Activated B cell treated with CpG ODN at 0.5 μM for 24 hours (primary cell): ENCODE measurements at regions of chr3 and their contacts with region 1.

Region 1: DNA sequence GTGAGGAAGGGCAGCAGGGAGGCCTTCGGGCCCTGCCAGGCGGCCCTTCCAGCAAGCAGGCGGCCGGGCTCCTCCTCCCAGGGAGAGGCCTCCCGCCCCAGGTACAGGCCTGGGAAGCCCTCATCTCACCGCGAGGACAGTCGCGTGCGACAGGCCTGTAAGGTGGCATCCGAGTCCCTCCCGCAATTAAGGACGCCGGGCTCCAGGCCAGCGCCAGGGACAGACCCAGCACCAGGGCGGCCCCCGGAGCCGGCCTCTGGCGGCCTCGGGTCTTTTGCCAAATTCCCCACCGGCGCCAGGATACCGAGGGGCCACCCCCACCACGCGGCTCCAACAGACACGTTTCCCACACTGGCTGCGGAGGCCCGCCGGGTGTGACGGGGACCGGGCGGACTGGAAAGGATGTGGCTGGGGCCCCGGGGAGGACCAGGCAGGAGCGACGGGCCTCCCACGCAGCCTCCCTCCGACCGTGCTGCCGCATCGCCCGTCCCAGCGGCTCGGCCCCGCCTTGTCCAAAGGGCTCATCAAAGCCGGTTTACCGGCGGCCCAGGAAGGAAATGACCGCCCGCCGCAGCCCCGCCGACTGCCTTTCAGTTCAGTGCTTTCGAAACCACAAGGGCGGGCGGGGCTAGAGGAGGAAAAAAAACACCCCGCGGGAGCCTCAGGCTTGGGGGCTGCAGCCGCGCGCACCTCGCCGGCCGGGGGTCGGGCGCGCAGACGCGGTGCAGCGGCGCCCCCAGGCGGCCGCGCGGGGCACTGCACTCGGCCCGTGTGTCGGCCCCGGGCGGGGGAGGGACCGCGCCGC is 11.3 kb downstream of the XXYLT1 start:
- DNase-seq: peak; percentile 95
- ATAC-seq: peak; percentile 91
- H3K4me3 Mint-ChIP-seq: peak overlapping the region; percentile 74
- H3K27ac Mint-ChIP-seq: peak overlapping the region; percentile 81
- H3K4me1 Mint-ChIP-seq: peaks cover 13% of the 10 kb centered on the region
- H3K27me3 Mint-ChIP-seq: no peaks in the 10 kb centered on the region
- CTCF ChIP-seq: no peak

Region 2: DNA sequence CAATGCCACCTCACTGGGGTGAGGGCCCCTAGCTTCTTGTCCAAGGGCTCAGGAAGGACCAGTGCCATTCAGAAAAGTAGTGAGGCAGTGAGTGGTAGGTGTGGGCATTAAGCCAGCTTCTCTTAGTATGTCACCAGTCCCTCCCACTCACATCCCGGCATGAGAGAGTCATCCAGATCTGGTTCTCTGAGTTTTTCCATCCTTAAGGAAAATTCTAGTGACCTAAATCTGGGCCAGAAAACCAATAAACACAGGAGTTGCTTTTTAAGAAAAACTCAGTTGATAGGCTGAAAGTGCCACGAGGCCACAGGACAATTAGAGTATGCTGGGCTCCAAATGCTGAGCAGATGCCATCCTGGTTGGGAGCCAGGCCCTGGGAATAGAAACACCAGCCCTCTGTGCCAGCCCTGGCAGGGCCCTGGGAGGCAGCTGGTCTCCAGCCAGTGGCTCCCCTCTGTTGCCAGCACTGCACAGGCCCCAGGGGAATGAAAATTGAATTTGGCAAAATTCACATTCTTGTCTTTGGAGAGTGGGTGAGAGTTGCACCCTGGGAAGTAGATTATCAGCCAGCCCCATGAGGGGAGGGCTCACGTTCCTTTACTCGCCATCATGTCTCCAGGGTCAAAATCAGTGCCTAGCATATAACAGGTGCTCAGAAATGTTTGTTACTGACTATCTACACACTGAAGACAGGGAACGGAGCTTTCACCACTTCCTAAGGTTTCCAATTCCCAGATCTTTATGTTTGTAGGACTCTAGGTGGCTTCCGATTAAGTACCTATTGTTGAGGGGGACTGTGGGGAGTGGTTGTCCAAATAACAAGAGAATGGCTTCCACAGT is 521.2 kb before region 1 on chr3:
- CTCF ChIA-PET with region 1: no interaction called
- POLR2A ChIA-PET with region 1: no interaction called
- intact Hi-C with region 1: loop called (anchors 1 kb)
- DNase-seq: no peak
- ATAC-seq: no peak
- H3K4me3 Mint-ChIP-seq: no peak overlapping the region
- H3K27ac Mint-ChIP-seq: no peak overlapping the region
- H3K4me1 Mint-ChIP-seq: peaks cover 30% of the 10 kb centered on the region
- H3K27me3 Mint-ChIP-seq: no peaks in the 10 kb centered on the region
- CTCF ChIP-seq: no peak

Region 3: GRCh38 chr3:194769020-194769643 is 490.5 kb before region 1 on chr3:
- CTCF ChIA-PET with region 1: interaction called, 3 read pairs
- POLR2A ChIA-PET with region 1: no interaction called
- intact Hi-C with region 1: loop called (anchors 1 kb)
- DNase-seq: peak; percentile 69
- ATAC-seq: peak; percentile 98
- H3K4me3 Mint-ChIP-seq: peak overlapping the region; percentile 86
- H3K27ac Mint-ChIP-seq: peak overlapping the region; percentile 94
- H3K4me1 Mint-ChIP-seq: peaks cover 34% of the 10 kb centered on the region
- H3K27me3 Mint-ChIP-seq: peaks cover 5% of the 10 kb centered on the region
- CTCF ChIP-seq: no peak

Region 4: GRCh38 chr3:195001961-195002861 is 257.5 kb before region 1 on chr3:
- CTCF ChIA-PET with region 1: interaction called, 6 read pairs
- POLR2A ChIA-PET with region 1: interaction called, 3 read pairs
- intact Hi-C with region 1: loop called (anchors 1 kb)
- DNase-seq: no peak
- ATAC-seq: peak; percentile 79
- H3K4me3 Mint-ChIP-seq: no peak overlapping the region
- H3K27ac Mint-ChIP-seq: no peak overlapping the region
- H3K4me1 Mint-ChIP-seq: peaks cover 31% of the 10 kb centered on the region
- H3K27me3 Mint-ChIP-seq: no peaks in the 10 kb centered on the region
- CTCF ChIP-seq: no peak

Region 5: DNA sequence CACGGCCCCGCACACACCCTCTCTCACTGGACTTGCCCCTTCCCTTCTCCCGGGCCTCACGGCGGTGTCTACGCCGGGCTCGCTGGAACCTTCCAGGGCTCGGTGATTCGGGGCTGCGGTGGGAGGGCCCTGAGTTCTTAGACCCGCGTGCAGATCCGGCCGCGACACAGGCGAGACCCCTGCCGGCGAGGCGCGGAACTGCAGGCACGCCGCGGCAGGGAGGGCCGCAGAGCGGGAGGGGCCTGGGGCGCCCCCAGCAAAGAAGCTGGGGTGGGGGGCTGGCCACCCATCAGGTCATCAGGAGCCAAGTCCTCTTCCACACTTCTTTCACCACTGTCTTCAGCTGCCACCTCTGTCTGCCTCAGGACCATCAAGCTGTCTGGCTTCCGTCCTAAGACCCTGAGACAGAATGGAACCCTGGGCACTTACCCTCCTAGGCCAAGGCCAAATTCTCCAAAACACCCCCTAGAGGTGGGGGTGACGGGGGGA is 153.2 kb before region 1 on chr3:
- CTCF ChIA-PET with region 1: interaction called, 5 read pairs
- POLR2A ChIA-PET with region 1: interaction called, 3 read pairs
- intact Hi-C with region 1: loop called (anchors 1 kb)
- DNase-seq: peak; percentile 86
- ATAC-seq: peak; percentile 98
- H3K4me3 Mint-ChIP-seq: peak overlapping the region; percentile 67
- H3K27ac Mint-ChIP-seq: peak overlapping the region; percentile 61
- H3K4me1 Mint-ChIP-seq: peaks cover 35% of the 10 kb centered on the region
- H3K27me3 Mint-ChIP-seq: no peaks in the 10 kb centered on the region
- CTCF ChIP-seq: peak; percentile 94

Region 6: GRCh38 chr3:195154793-195155535 is 104.7 kb before region 1 on chr3:
- CTCF ChIA-PET with region 1: interaction called, 3 read pairs
- POLR2A ChIA-PET with region 1: interaction called, 5 read pairs
- intact Hi-C with region 1: loop called (anchors 2 kb)
- DNase-seq: no peak
- ATAC-seq: peak; percentile 40
- H3K4me3 Mint-ChIP-seq: peak overlapping the region; percentile 53
- H3K27ac Mint-ChIP-seq: peak overlapping the region; percentile 90
- H3K4me1 Mint-ChIP-seq: peaks cover 90% of the 10 kb centered on the region
- H3K27me3 Mint-ChIP-seq: no peaks in the 10 kb centered on the region
- CTCF ChIP-seq: no peak

Region 7: GRCh38 chr3:195204360-195205163 is 55.1 kb before region 1 on chr3:
- CTCF ChIA-PET with region 1: no interaction called
- POLR2A ChIA-PET with region 1: no interaction called
- intact Hi-C with region 1: loop called (anchors 5 kb)
- DNase-seq: no peak
- ATAC-seq: peak; percentile 30
- H3K4me3 Mint-ChIP-seq: peak overlapping the region; percentile 25
- H3K27ac Mint-ChIP-seq: peak overlapping the region; percentile 82
- H3K4me1 Mint-ChIP-seq: peaks cover 31% of the 10 kb centered on the region
- H3K27me3 Mint-ChIP-seq: no peaks in the 10 kb centered on the region
- CTCF ChIP-seq: no peak